Activated CD4-positive, alpha-beta T cell treated with anti-CD3 and anti-CD28 coated beads for 36 hours (primary cell): ENCODE measurements at regions of chr9 and their contacts with region 1.

Region 1: GRCh38 chr9:128455849-128456612 is at the start of gene ODF2:
- DNase-seq: peak; percentile 99
- ATAC-seq: peak; percentile 95
- H3K4me3 Mint-ChIP-seq: peak within 1 kb of the TSS; percentile 81
- H3K27ac Mint-ChIP-seq: peak within 1 kb of the TSS; percentile 82
- H3K4me1 Mint-ChIP-seq: peaks cover 16% of the 10 kb centered on the region
- H3K27me3 Mint-ChIP-seq: no peaks in the 10 kb centered on the region
- total RNA-seq, gene ODF2: 73.5 to 86.4 TPM

Region 2: DNA sequence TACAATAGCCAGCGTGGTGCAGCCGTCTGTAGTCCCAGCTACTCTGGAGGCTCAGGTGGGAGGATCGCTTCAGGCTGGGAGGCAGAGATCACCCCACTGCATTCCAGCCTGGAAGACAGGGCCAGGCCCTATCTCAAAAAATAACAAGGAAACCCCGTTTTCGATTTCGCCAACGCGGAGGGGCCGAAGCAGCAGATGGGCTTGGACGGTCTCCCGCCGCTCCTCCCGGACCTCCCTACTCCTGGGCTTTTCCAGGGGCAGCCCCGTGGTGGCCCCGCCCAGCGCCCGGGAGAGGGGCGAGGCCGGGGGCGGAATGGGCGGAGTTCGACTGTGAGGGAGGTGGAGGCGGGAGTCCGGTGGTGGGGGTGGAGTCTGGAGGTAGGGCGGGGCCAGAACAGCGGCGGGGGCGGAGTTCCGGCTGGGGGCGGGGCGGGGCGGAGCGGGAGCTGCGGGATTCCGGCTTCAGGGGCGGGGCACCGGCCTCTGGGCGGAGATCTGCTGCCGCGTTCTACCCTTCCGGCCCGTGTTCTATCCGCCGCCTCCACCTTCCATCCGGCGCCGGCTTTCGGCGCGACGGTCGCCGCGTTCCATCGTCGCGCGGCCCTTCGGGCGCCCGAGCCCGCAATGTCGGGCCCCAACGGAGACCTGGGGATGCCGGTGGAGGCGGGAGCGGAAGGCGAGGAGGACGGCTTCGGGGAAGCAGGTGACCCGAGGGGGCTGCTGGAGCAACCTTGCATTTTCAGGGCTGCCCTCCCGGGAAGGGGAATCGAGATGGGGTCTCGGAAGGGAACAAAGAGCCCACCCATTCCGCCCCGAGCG is 296.0 kb before region 1 on chr9 and contains the start of gene BBLN:
- CTCF ChIA-PET with region 1: no interaction called
- POLR2A ChIA-PET with region 1: no interaction called
- intact Hi-C with region 1: loop called in 1 of 2 experiments (anchors 1 kb)
- DNase-seq: peak; percentile 98
- ATAC-seq: peak; percentile 91
- H3K4me3 Mint-ChIP-seq: peak within 1 kb of the TSS; percentile 74
- H3K27ac Mint-ChIP-seq: peak within 1 kb of the TSS; percentile 90
- H3K4me1 Mint-ChIP-seq: peaks cover 19% of the 10 kb centered on the region
- H3K27me3 Mint-ChIP-seq: no peaks in the 10 kb centered on the region
- total RNA-seq, gene BBLN: 64.4 to 68.5 TPM

Region 3: GRCh38 chr9:128339771-128340690 is 116.0 kb before region 1 on chr9 and contains the start of gene SLC27A4:
- CTCF ChIA-PET with region 1: no interaction called
- POLR2A ChIA-PET with region 1: no interaction called
- intact Hi-C with region 1: loop called in 1 of 2 experiments (anchors 1 kb)
- DNase-seq: peak; percentile 88
- ATAC-seq: peak; percentile 93
- H3K4me3 Mint-ChIP-seq: peak within 1 kb of the TSS; percentile 88
- H3K27ac Mint-ChIP-seq: peak within 1 kb of the TSS; percentile 83
- H3K4me1 Mint-ChIP-seq: peaks cover 6% of the 10 kb centered on the region
- H3K27me3 Mint-ChIP-seq: no peaks in the 10 kb centered on the region
- total RNA-seq, gene SLC27A4: 8.4 to 10.2 TPM

Region 4: GRCh38 chr9:128552153-128552743 is 96.2 kb after region 1 on chr9 and contains the start of gene SPTAN1:
- CTCF ChIA-PET with region 1: no interaction called
- POLR2A ChIA-PET with region 1: no interaction called
- intact Hi-C with region 1: loop called (anchors 1 to 2 kb)
- DNase-seq: peak; percentile 98
- ATAC-seq: peak; percentile 78
- H3K4me3 Mint-ChIP-seq: no peak within 1 kb of the TSS
- H3K27ac Mint-ChIP-seq: peak within 1 kb of the TSS; percentile 97
- H3K4me1 Mint-ChIP-seq: peaks cover 34% of the 10 kb centered on the region
- H3K27me3 Mint-ChIP-seq: no peaks in the 10 kb centered on the region
- total RNA-seq, gene SPTAN1: 192 to 269 TPM

Region 5: GRCh38 chr9:128786681-128787601 is 330.9 kb after region 1 on chr9 and contains the start of gene TBC1D13:
- CTCF ChIA-PET with region 1: interaction called, 3 read pairs
- POLR2A ChIA-PET with region 1: no interaction called
- intact Hi-C with region 1: loop called in 1 of 2 experiments (anchors 1 kb)
- DNase-seq: peak; percentile 94
- ATAC-seq: peak; percentile 97
- H3K4me3 Mint-ChIP-seq: peak within 1 kb of the TSS; percentile 87
- H3K27ac Mint-ChIP-seq: peak within 1 kb of the TSS; percentile 87
- H3K4me1 Mint-ChIP-seq: peaks cover 18% of the 10 kb centered on the region
- H3K27me3 Mint-ChIP-seq: no peaks in the 10 kb centered on the region
- total RNA-seq, gene TBC1D13: 10.5 to 14.0 TPM

Region 6: GRCh38 chr9:129028192-129028957 is 572.3 kb after region 1 on chr9 and contains the start of gene SH3GLB2:
- CTCF ChIA-PET with region 1: interaction called, 3 read pairs
- POLR2A ChIA-PET with region 1: no interaction called
- intact Hi-C with region 1: loop called in 1 of 2 experiments (anchors 1 kb)
- DNase-seq: peak; percentile 98
- ATAC-seq: peak; percentile 93
- H3K4me3 Mint-ChIP-seq: peak within 1 kb of the TSS; percentile 81
- H3K27ac Mint-ChIP-seq: peak within 1 kb of the TSS; percentile 52
- H3K4me1 Mint-ChIP-seq: peaks cover 17% of the 10 kb centered on the region
- H3K27me3 Mint-ChIP-seq: no peaks in the 10 kb centered on the region
- total RNA-seq, gene SH3GLB2: 49.1 to 53.7 TPM